GM18951 (cell line): ENCODE measurements at regions of chr9 and their contacts with region 1.

Region 1: GRCh38 chr9:4923580-4924544 is 61.2 kb upstream of the JAK2 start:
- POLR2A ChIP-seq: no peak

Region 2: DNA sequence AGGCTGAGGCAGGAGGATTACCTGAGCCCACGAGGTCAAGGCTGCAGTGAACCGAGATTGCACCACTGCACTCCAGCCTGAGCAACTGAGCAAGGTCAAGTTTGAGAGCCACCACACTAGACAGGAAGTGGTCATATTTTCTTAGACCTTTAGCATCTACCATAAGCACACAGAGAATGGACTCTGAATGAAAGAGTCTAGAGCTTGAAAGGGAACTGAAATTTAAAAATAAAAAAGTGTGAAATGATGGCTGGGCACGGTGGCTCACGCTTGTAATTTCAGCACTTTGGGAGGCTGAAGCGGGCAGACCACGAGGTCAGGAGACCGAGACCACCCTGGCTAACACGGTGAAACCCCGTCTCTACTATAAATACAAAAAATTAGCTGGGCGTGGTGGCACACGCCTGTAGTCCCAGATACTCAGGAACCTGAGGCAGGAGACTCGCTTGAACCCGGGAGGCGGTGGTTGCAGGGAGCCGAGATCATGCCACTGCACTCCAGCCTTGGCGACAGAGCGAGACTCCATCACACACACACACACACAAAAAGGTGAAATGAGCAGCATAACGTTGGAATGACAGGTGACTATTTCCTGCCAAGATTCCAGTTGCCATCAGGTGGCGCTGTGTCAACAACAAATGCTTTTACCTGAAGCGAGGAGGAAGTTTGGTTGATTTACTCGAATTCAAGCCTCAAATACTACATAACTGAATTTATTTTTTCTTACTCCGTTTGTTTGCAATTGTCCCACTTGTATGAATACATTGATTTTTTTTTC is 161.6 kb before region 1 on chr9:
- in situ Hi-C with region 1: loop called (anchors 10 kb)
- POLR2A ChIP-seq: no peak

Region 3: DNA sequence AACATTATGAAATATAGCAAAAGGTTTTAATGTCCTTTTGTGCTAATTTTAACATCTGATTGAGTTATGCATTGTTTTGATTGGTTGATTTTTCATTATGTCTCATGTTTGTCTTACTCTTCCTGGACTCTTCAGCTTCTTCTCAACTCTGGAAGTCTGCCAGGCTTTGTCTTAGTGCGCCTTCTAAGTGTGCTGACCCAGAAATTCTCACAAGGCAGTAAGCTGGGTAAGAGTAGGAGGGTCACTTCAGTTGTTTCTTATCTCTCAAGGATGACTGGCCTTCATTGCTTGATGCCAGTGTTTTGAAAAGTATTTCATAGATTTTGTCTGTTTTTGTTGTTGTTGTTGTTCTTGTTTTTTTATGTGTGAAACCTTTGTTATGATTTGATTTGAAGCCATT is 764.2 kb after region 1 on chr9:
- in situ Hi-C with region 1: no loop called
- POLR2A ChIP-seq: no peak